ENCODE measurements at regions of chr12 and their contacts with region 1.

Region 1: DNA sequence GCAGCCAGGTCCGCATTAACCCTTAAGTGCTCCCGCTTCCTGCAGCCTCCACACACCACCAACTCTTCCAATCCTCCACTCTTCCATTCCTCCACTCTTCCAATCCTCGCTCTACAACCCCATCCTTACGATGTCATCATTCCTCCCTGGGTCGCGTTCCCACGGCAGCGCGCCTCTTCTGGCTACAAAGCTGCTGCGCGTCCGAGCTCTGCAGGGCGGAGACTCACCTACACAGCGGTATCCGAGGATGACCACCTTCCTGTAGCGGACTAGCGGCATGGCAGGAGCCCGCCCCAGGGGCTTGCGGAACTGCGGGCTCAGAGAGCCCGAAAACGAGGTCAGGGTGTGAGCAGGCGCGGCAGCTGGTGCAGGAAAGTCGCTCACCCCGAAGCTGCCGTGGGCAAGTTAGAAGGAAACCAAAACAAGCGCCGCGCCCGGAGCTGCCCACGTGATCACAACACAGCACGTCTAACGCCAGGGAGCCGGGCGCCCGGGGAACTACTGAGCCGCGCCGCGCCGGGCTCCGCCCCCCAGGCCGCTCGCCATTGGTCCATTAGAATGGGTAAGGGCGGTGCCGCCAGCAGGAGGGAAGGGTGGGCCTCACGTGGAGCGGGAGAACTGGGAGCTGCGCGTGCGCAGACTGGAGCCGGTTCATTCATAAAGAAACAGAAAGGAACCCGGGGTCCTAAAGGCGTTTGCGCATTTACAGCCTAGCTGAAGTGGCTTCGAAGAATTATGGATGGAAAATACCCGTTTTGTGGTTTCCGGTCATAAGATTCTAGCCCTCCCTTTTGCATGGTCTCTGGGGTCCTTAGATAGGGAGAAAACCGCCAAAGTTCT is at the start of gene RHEBL1:
- DNase-seq: peak; percentile 97 to 98
- ATAC-seq: peak; percentile 97 to 99
- H3K4me3 ChIP-seq: peak within 1 kb of the TSS; percentile 55
- H3K27ac ChIP-seq: peak within 1 kb of the TSS; percentile 62 to 85
- H3K4me1 ChIP-seq: peaks cover 7% of the 10 kb centered on the region; the same call in 2 of the 3 replicates
- CTCF ChIP-seq: no peak
- EP300 ChIP-seq: no peak
- POLR2A ChIP-seq: no peak
- RAD21 ChIP-seq: no peak
- polyA plus RNA-seq, gene RHEBL1: 4.0 TPM in 2 replicates

Region 2: DNA sequence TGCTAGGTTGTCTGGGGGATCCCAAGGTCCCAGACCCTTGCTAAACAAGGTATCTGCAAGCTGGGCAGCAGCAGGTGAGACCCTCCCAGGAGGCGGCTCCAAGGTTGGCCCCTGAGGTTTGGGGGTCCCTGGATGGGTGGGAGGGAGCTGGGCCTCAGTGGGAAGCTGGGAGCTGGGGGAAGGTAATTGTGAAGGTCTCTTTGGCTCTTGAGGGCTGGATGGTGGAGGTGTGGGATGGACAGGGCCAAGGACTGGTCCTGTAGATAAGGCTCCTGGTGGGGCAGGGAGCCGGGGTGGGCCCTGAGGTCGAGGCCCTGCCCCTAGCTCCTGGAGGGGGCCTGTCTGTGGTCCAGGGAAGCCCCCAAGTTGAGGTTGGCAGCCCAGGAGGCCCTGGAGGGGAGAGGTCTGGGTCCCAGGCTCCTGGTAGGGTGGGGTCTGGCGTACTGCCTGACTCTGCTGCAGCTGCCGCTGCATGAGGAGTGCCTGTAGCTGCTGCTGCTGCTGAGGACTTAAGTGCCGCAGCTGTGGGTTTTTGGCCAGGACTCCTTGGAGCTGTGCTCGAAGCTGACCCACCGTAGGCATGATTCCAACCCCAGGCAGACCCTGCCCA is 38.1 kb before region 1 on chr12:
- CTCF ChIA-PET with region 1: interaction called, 12 read pairs
- POLR2A ChIA-PET with region 1: no interaction called
- DNase-seq: no peak
- ATAC-seq: peak in 1 of 2 experiments; percentile 4; a peak in 3 of 6 replicates
- H3K4me3 ChIP-seq: no peak overlapping the region
- H3K27ac ChIP-seq: no peak overlapping the region
- H3K4me1 ChIP-seq: no peaks in the 10 kb centered on the region
- CTCF ChIP-seq: no peak
- EP300 ChIP-seq: no peak
- POLR2A ChIP-seq: no peak
- RAD21 ChIP-seq: no peak

Region 3: GRCh38 chr12:49043856-49044258 is 25.9 kb before region 1 on chr12:
- CTCF ChIA-PET with region 1: interaction called, 16 read pairs
- POLR2A ChIA-PET with region 1: interaction called, 5 read pairs
- DNase-seq: peak; percentile 73 to 74
- ATAC-seq: peak; percentile 62 to 86; a peak in 5 of 6 replicates
- H3K4me3 ChIP-seq: no peak overlapping the region
- H3K27ac ChIP-seq: no peak overlapping the region
- H3K4me1 ChIP-seq: no peaks in the 10 kb centered on the region
- CTCF ChIP-seq: peak; percentile 55
- EP300 ChIP-seq: no peak
- POLR2A ChIP-seq: no peak
- RAD21 ChIP-seq: no peak

Region 4: DNA sequence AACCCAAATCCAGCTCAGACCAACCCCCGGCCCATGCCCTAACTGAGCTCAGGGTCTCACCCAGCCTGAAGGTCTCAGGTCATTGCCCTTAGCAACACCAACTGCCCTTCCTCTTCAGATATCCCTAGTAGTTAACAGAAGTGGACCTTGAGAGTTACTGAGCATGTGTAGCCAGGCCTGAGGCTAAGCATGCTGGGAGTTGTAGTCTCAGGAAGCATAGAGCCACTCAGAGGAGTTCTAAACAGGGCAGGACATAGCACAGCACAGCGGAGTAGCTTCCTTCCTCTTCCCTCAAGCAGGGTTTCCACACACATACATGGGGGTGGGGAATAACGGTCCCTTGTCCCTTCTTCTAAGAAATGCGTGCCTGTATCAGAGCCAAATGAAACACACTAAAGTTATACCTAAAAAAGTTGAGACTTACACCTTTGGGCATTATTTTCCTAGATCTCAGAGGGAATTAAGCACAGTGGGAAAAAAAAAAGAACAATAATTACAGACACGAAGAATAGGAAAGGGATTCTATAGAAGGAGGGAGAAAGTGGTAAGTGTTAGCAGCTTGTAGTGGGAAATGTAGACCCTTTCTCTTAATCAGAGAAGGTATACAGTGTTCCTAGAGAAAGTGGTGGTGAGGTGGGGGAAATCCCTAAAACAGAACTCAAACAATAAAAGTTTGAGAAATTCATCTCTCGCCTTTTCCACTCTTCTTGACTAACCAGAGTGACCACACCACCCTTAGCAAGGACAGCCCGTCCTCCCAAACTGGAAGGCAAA is 13.6 kb before region 1 on chr12:
- CTCF ChIA-PET with region 1: interaction called, 27 read pairs
- POLR2A ChIA-PET with region 1: interaction called, 4 read pairs
- DNase-seq: peak; percentile 75 to 83
- ATAC-seq: peak; percentile 57 to 79; a peak in 5 of 6 replicates
- H3K4me3 ChIP-seq: no peak overlapping the region
- H3K27ac ChIP-seq: no peak overlapping the region
- H3K4me1 ChIP-seq: peaks cover 29% of the 10 kb centered on the region
- CTCF ChIP-seq: no peak
- EP300 ChIP-seq: no peak
- POLR2A ChIP-seq: no peak
- RAD21 ChIP-seq: no peak

Region 5: DNA sequence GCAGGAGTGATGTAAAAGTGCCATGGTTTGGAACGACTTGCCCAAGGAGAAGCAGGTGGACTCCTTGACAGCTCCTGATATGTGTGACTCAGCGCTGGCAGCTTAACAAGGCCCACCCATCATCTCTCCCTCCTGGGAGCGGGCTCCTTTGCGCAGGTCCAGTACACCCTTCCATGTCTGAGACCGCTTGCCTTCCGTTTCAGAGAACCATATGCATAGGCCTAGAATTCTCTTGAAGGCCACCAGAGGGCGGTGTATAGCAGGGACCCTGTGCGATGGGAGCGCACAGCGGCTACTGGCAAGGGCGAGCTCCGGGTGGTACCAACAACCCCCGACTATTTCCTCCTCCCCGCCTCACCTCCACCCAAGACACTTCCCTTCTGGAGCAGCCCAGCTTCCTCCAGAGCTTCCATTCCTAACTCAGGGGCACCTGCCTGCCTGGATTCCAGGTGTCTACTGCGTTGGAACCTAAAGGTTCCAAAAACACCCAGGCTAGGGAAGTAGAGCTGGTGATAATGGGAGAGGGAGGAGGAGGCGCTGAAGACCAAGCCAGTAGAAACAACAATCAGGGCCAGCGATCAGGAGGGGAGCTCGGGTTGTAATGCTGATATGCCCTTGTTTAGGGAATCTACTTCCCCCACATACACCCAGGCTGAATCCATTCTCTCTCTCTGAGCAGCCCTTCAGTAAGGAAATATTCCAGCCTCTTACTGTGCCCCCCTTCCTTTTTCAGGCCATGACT is 18.6 kb after region 1 on chr12:
- CTCF ChIA-PET with region 1: interaction called, 172 read pairs
- POLR2A ChIA-PET with region 1: interaction called, 5 read pairs
- DNase-seq: peak; percentile 89 to 96
- ATAC-seq: peak; percentile 82 to 90
- H3K4me3 ChIP-seq: no peak overlapping the region
- H3K27ac ChIP-seq: peak overlapping the region in 1 of 2 experiments; percentile 64; a peak in 3 of 6 replicates
- H3K4me1 ChIP-seq: peaks cover 17% of the 10 kb centered on the region; the same call in 2 of the 3 replicates
- CTCF ChIP-seq: peak; percentile 92
- EP300 ChIP-seq: no peak
- POLR2A ChIP-seq: no peak
- RAD21 ChIP-seq: peak; percentile 69 to 74

Region 6: DNA sequence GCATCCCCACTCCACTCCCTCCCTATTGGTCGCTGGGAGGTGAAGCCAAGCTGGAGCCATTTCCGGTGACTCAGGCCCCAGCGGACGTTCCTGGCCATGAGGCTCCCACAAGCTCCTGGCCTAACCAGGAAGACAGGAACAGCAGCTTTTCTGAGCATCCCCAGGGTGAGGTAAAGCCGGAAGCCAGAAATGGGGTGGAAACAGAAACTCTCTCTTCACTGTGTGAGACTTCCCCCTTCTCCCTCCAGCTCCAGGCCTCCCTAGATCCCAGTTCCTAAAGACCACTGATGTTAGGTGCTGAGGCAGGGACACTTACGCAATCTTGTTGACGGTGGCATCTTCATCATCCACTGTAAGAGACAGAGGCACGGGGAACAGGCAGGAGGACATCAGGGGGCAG is 35.9 kb after region 1 on chr12:
- CTCF ChIA-PET with region 1: interaction called, 166 read pairs
- POLR2A ChIA-PET with region 1: interaction called, 3 read pairs
- DNase-seq: no peak
- ATAC-seq: no peak
- H3K4me3 ChIP-seq: no peak overlapping the region
- H3K27ac ChIP-seq: no peak overlapping the region
- H3K4me1 ChIP-seq: peaks cover 15% of the 10 kb centered on the region
- CTCF ChIP-seq: no peak
- EP300 ChIP-seq: no peak
- POLR2A ChIP-seq: no peak
- RAD21 ChIP-seq: no peak

Region 7: GRCh38 chr12:49232940-49233841 is 163.5 kb after region 1 on chr12:
- CTCF ChIA-PET with region 1: interaction called, 17 read pairs
- POLR2A ChIA-PET with region 1: interaction called, 3 read pairs
- DNase-seq: no peak
- ATAC-seq: no peak
- H3K4me3 ChIP-seq: no peak overlapping the region
- H3K27ac ChIP-seq: peak overlapping the region in 1 of 2 experiments; percentile 92; a peak in 1 of 6 replicates
- H3K4me1 ChIP-seq: peaks cover 3% of the 10 kb centered on the region; the same call in 1 of the 3 replicates
- CTCF ChIP-seq: no peak
- EP300 ChIP-seq: no peak
- POLR2A ChIP-seq: no peak
- RAD21 ChIP-seq: no peak

Measured in A549 (cell line).